CD8-positive, alpha-beta T cell (primary cell): ENCODE measurements at regions of chr16 and their contacts with region 1.

Region 1: DNA sequence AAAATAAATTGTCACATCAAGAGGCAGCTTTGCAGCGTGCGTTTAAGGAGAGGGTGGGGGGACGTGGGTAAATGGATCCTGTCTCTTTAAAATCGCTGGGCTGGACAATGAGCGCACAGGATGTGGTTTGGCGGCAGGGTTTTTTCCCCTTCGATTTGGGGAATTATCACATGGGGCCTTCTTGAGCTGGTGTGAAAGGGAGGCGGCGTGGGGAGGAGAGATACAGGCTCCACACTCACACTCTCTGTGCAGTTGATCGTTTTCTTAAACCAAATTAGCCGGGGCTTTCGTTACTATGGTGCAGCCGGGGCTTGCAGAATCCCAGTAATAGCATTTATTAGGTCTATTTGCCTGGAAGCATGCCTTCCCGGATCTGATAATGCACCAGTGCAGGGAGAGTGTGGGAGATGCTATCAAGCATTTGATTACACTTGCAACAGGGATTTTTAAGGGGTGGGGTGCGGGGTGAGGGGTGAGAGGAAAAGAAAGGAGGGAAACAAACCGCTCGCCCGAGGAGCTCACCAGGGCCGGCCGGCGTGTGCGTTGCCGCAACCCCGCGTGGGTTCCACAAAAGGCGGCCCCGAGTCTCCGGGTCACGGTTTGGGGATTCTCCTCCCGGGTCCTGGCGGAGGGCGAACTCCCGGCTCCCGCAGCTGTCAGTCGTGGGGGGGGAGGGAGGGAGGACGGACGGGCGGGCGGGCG is 58.9 kb upstream of the GSE1 start:
- DNase-seq: peak; percentile 43 to 95 (median 75)
- ATAC-seq: peak; percentile 39
- H3K4me3 ChIP-seq: peak overlapping the region; percentile 58 to 94
- H3K4me3 Mint-ChIP-seq: peak overlapping the region; percentile 93
- H3K27ac ChIP-seq: peak overlapping the region; percentile 56 to 85
- H3K27ac Mint-ChIP-seq: peak overlapping the region; percentile 92
- H3K4me1 ChIP-seq: peaks cover 27% of the 10 kb centered on the region
- H3K4me1 Mint-ChIP-seq: peaks cover 37% of the 10 kb centered on the region
- H3K27me3 ChIP-seq: no peaks in the 10 kb centered on the region
- H3K27me3 Mint-ChIP-seq: no peaks in the 10 kb centered on the region
- CTCF ChIP-seq: no peak

Region 2: GRCh38 chr16:84511180-84511824 is 1043.0 kb before region 1 on chr16:
- CTCF ChIA-PET with region 1: no interaction called
- POLR2A ChIA-PET with region 1: no interaction called
- intact Hi-C with region 1: loop called in 1 of 2 experiments (anchors 10 kb)
- DNase-seq: peak; percentile 75 to 93 (median 84)
- ATAC-seq: peak; percentile 16
- H3K4me3 ChIP-seq: no peak overlapping the region
- H3K4me3 Mint-ChIP-seq: no peak overlapping the region
- H3K27ac ChIP-seq: no peak overlapping the region
- H3K27ac Mint-ChIP-seq: peak overlapping the region; percentile 60
- H3K4me1 ChIP-seq: peaks cover 85% of the 10 kb centered on the region
- H3K4me1 Mint-ChIP-seq: peaks cover 73% of the 10 kb centered on the region
- H3K27me3 ChIP-seq: peaks cover 0 to 2% of the 10 kb centered on the region in 2 experiments
- H3K27me3 Mint-ChIP-seq: no peaks in the 10 kb centered on the region
- CTCF ChIP-seq: peak; percentile 95

Region 3: DNA sequence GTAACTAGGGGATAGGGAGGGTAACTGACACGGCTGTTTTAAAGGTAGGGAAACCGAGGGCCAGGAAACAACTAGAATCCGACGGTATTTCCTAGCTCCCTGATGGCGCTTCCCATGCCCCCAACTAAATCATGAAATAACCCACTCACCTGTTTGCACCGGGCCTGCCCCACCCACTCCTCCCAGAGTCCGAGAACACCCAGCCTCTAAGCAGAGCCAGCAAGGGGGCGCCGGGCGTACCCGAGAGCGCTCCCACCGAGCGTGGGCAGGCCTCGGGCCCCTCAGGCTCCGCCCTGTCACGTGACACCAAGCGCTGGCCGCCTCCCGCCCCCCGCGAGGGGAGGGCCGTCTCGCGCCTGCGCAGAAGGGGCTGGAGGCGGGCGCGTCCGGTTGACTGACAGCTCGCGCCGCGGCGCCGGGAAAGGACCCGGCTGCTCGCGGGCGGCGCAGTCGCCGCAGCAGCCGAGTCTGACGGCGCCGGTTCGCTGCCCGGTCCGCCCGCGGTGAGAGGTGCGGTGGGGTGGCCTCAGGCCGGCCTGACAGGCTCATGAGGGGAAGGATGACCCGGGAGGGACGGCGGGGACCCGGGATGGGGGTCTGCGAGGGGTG is 526.8 kb before region 1 on chr16 and contains the start of gene KIAA0513:
- CTCF ChIA-PET with region 1: no interaction called
- POLR2A ChIA-PET with region 1: no interaction called
- intact Hi-C with region 1: loop called (anchors 10 kb)
- DNase-seq: peak; percentile 91 to 98 (median 97)
- ATAC-seq: peak; percentile 62
- H3K4me3 ChIP-seq: peak within 1 kb of the TSS; percentile 64 to 71
- H3K4me3 Mint-ChIP-seq: peak within 1 kb of the TSS; percentile 90
- H3K27ac ChIP-seq: peak within 1 kb of the TSS; percentile 62 to 73
- H3K27ac Mint-ChIP-seq: peak within 1 kb of the TSS; percentile 97
- H3K4me1 ChIP-seq: peaks cover 31% of the 10 kb centered on the region
- H3K4me1 Mint-ChIP-seq: peaks cover 43% of the 10 kb centered on the region
- H3K27me3 ChIP-seq: no peaks in the 10 kb centered on the region
- H3K27me3 Mint-ChIP-seq: no peaks in the 10 kb centered on the region
- CTCF ChIP-seq: no peak
- total RNA-seq, gene KIAA0513: 9.7 to 10.3 TPM

Region 4: GRCh38 chr16:85420501-85421337 is 133.5 kb before region 1 on chr16:
- CTCF ChIA-PET with region 1: interaction called, 29 read pairs
- POLR2A ChIA-PET with region 1: interaction called, 3 read pairs
- intact Hi-C with region 1: no loop called
- DNase-seq: peak; percentile 60 to 87 (median 72)
- ATAC-seq: peak; percentile 91
- H3K4me3 ChIP-seq: no peak overlapping the region
- H3K4me3 Mint-ChIP-seq: no peak overlapping the region
- H3K27ac ChIP-seq: no peak overlapping the region
- H3K27ac Mint-ChIP-seq: no peak overlapping the region
- H3K4me1 ChIP-seq: peaks cover 7% of the 10 kb centered on the region
- H3K4me1 Mint-ChIP-seq: peaks cover 2% of the 10 kb centered on the region
- H3K27me3 ChIP-seq: no peaks in the 10 kb centered on the region
- H3K27me3 Mint-ChIP-seq: peaks cover 2% of the 10 kb centered on the region
- CTCF ChIP-seq: peak; percentile 100

Region 5: DNA sequence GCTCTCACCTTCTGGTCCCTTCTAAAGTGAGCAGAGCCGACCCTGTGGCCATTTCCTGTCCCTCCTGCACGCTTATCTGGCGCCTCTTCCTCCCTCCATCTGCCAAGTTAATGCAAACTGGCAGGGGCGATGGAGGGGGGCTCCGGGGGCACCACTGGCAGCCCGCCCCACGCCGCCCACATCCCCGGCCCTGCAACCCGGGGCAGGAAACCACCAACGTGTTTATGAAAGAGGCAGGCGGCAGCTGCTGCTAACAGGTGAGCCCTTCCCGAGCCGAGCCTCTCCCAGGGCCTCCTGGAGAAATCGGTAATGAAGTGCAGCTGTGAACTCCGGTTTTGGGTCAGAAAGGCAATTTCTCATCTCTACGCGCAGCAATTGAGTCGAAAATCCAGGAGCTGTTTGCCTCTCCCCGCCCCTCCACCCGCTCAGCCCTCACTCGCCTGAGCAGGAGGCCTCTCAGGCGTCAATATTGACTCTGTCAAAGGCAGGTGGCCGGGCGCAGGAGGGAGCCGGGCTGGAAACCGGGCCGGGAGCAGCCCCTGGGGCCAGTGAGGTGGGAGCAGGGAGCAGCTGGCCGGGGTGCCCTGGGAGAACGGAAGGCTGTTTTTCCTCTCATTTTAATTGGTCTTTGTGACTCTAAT is 105.6 kb before region 1 on chr16:
- CTCF ChIA-PET with region 1: interaction called, 8 read pairs
- POLR2A ChIA-PET with region 1: interaction called, 15 read pairs
- intact Hi-C with region 1: loop called in 1 of 2 experiments (anchors 10 kb)
- DNase-seq: peak; percentile 34 to 90 (median 71)
- ATAC-seq: peak; percentile 83
- H3K4me3 ChIP-seq: peak overlapping the region; percentile 0 to 39
- H3K4me3 Mint-ChIP-seq: peak overlapping the region; percentile 70
- H3K27ac ChIP-seq: peak overlapping the region; percentile 52 to 64
- H3K27ac Mint-ChIP-seq: peak overlapping the region; percentile 97
- H3K4me1 ChIP-seq: peaks cover 76% of the 10 kb centered on the region
- H3K4me1 Mint-ChIP-seq: peaks cover 61% of the 10 kb centered on the region
- H3K27me3 ChIP-seq: no peaks in the 10 kb centered on the region
- H3K27me3 Mint-ChIP-seq: no peaks in the 10 kb centered on the region
- CTCF ChIP-seq: no peak

Region 6: GRCh38 chr16:85517563-85518179 is 36.6 kb before region 1 on chr16:
- CTCF ChIA-PET with region 1: no interaction called
- POLR2A ChIA-PET with region 1: no interaction called
- intact Hi-C with region 1: loop called in 1 of 2 experiments (anchors 1 kb)
- DNase-seq: no peak
- ATAC-seq: no peak
- H3K4me3 ChIP-seq: no peak overlapping the region
- H3K4me3 Mint-ChIP-seq: no peak overlapping the region
- H3K27ac ChIP-seq: no peak overlapping the region
- H3K27ac Mint-ChIP-seq: no peak overlapping the region
- H3K4me1 ChIP-seq: peaks cover 4% of the 10 kb centered on the region
- H3K4me1 Mint-ChIP-seq: peaks cover 6% of the 10 kb centered on the region
- H3K27me3 ChIP-seq: peaks cover 0 to 3% of the 10 kb centered on the region in 2 experiments
- H3K27me3 Mint-ChIP-seq: no peaks in the 10 kb centered on the region
- CTCF ChIP-seq: no peak

Region 7: GRCh38 chr16:85569615-85570212 is 15.5 kb after region 1 on chr16:
- CTCF ChIA-PET with region 1: interaction called, 12 read pairs
- POLR2A ChIA-PET with region 1: interaction called, 22 read pairs
- intact Hi-C with region 1: loop called in 1 of 2 experiments (anchors 1 kb)
- DNase-seq: peak in 7 of 9 experiments; percentile 29 to 82 (median 65)
- ATAC-seq: peak; percentile 59
- H3K4me3 ChIP-seq: peak overlapping the region; percentile 39 to 40
- H3K4me3 Mint-ChIP-seq: peak overlapping the region; percentile 75
- H3K27ac ChIP-seq: peak overlapping the region; percentile 34 to 82
- H3K27ac Mint-ChIP-seq: peak overlapping the region; percentile 89
- H3K4me1 ChIP-seq: peaks cover 56% of the 10 kb centered on the region
- H3K4me1 Mint-ChIP-seq: peaks cover 69% of the 10 kb centered on the region
- H3K27me3 ChIP-seq: no peaks in the 10 kb centered on the region
- H3K27me3 Mint-ChIP-seq: no peaks in the 10 kb centered on the region
- CTCF ChIP-seq: no peak

Region 8: GRCh38 chr16:85639536-85640253 is 85.4 kb after region 1 on chr16:
- CTCF ChIA-PET with region 1: no interaction called
- POLR2A ChIA-PET with region 1: no interaction called
- intact Hi-C with region 1: no loop called
- DNase-seq: no peak
- ATAC-seq: no peak
- H3K4me3 ChIP-seq: no peak overlapping the region
- H3K4me3 Mint-ChIP-seq: no peak overlapping the region
- H3K27ac ChIP-seq: no peak overlapping the region
- H3K27ac Mint-ChIP-seq: no peak overlapping the region
- H3K4me1 ChIP-seq: peaks cover 7% of the 10 kb centered on the region
- H3K4me1 Mint-ChIP-seq: peaks cover 12% of the 10 kb centered on the region
- H3K27me3 ChIP-seq: no peaks in the 10 kb centered on the region
- H3K27me3 Mint-ChIP-seq: no peaks in the 10 kb centered on the region
- CTCF ChIP-seq: no peak

Region 9: GRCh38 chr16:85821441-85822135 is 267.3 kb after region 1 on chr16:
- CTCF ChIA-PET with region 1: no interaction called
- POLR2A ChIA-PET with region 1: no interaction called
- intact Hi-C with region 1: no loop called
- DNase-seq: peak; percentile 68 to 91 (median 78)
- ATAC-seq: peak; percentile 92
- H3K4me3 ChIP-seq: no peak overlapping the region
- H3K4me3 Mint-ChIP-seq: no peak overlapping the region
- H3K27ac ChIP-seq: no peak overlapping the region
- H3K27ac Mint-ChIP-seq: no peak overlapping the region
- H3K4me1 ChIP-seq: no peaks in the 10 kb centered on the region
- H3K4me1 Mint-ChIP-seq: peaks cover 6% of the 10 kb centered on the region
- H3K27me3 ChIP-seq: no peaks in the 10 kb centered on the region
- H3K27me3 Mint-ChIP-seq: no peaks in the 10 kb centered on the region
- CTCF ChIP-seq: peak; percentile 96